GM12878 (cell line): ENCODE measurements at regions of chr5 and their contacts with region 1.

Region 1: DNA sequence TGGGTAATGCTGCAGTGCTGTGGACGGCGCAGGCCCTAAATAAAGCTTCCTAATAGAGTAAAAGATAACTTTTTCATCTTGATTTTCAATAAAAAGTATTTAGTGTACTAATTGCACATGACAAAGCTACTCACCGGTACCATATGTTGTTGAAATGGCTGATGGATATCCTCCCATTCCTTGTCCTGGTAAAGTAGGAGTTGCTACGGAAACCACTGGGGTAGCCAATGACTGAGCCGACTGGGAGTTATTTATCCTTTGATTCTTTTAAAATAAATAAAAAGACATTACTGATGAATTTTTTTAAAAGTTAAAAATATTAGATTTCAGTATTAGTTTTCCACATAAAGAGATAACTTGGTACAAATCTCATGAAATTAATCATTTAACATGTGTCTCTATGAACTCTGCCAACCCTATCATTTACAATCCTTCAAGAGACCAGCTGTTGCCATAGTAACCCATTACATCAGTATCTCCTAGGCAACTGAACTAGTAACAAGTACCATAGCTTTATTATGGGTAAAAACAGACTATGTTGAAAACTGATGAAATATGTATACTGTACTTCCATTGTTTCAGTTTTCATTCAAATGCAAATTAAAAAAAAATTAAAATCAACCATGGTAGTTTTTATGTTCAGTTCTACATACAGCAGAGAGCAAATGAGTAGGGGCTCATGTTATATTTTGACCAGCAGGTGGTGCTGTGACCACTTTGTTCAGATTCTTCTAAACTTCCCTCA is 153.7 kb downstream of the MEF2C start:
- DNase-seq: peak; percentile 73
- ATAC-seq: peak; percentile 46
- H3K4me3 ChIP-seq: no peak overlapping the region
- H3K27ac ChIP-seq: no peak overlapping the region
- H3K4me1 ChIP-seq: peaks cover 34% of the 10 kb centered on the region
- H3K27me3 ChIP-seq: no peaks in the 10 kb centered on the region
- CTCF ChIP-seq: peak; percentile 54 to 77 (median 58); a peak in 5 of 6 replicates
- EP300 ChIP-seq: no peak
- POLR2A ChIP-seq: no peak
- RAD21 ChIP-seq: peak; percentile 85

Region 2: GRCh38 chr5:88644676-88645075 is 84.6 kb before region 1 on chr5:
- CTCF ChIA-PET with region 1: no interaction called
- POLR2A ChIA-PET with region 1: no interaction called
- RAD21 ChIA-PET with region 1: no interaction called
- SMC1A ChIA-PET with region 1: no interaction called
- in situ Hi-C with region 1: no loop called
- intact Hi-C with region 1: no loop called
- DNase-seq: no peak
- ATAC-seq: no peak
- H3K4me3 ChIP-seq: no peak overlapping the region
- H3K27ac ChIP-seq: no peak overlapping the region
- H3K4me1 ChIP-seq: no peaks in the 10 kb centered on the region
- H3K27me3 ChIP-seq: no peaks in the 10 kb centered on the region
- CTCF ChIP-seq: no peak
- EP300 ChIP-seq: no peak
- POLR2A ChIP-seq: no peak
- RAD21 ChIP-seq: no peak

Region 3: GRCh38 chr5:88659529-88660263 is 69.6 kb before region 1 on chr5:
- CTCF ChIA-PET with region 1: no interaction called
- POLR2A ChIA-PET with region 1: no interaction called
- RAD21 ChIA-PET with region 1: no interaction called
- SMC1A ChIA-PET with region 1: no interaction called
- in situ Hi-C with region 1: no loop called
- intact Hi-C with region 1: no loop called
- DNase-seq: no peak
- ATAC-seq: peak; percentile 43
- H3K4me3 ChIP-seq: peak overlapping the region; percentile 44; the same call in 1 of the 2 replicates
- H3K27ac ChIP-seq: no peak overlapping the region
- H3K4me1 ChIP-seq: peaks cover 20% of the 10 kb centered on the region
- H3K27me3 ChIP-seq: peaks cover 0 to 18% of the 10 kb centered on the region in 2 experiments; a peak in 2 of 4 replicates
- CTCF ChIP-seq: no peak
- EP300 ChIP-seq: no peak
- POLR2A ChIP-seq: no peak
- RAD21 ChIP-seq: no peak

Region 4: GRCh38 chr5:88746438-88746882 is 17.2 kb after region 1 on chr5:
- CTCF ChIA-PET with region 1: interaction called, 25 read pairs
- POLR2A ChIA-PET with region 1: interaction called, 17 read pairs
- RAD21 ChIA-PET with region 1: interaction called, 43 read pairs
- SMC1A ChIA-PET with region 1: interaction called, 83 read pairs
- in situ Hi-C with region 1: no loop called
- intact Hi-C with region 1: no loop called
- DNase-seq: peak; percentile 76
- ATAC-seq: peak; percentile 87
- H3K4me3 ChIP-seq: no peak overlapping the region
- H3K27ac ChIP-seq: peak overlapping the region; percentile 76
- H3K4me1 ChIP-seq: peaks cover 23% of the 10 kb centered on the region; the same call in 1 of the 2 replicates
- H3K27me3 ChIP-seq: no peaks in the 10 kb centered on the region
- CTCF ChIP-seq: no peak
- EP300 ChIP-seq: no peak
- POLR2A ChIP-seq: no peak
- RAD21 ChIP-seq: no peak

Region 5: GRCh38 chr5:88819301-88819999 is 90.2 kb after region 1 on chr5:
- CTCF ChIA-PET with region 1: interaction called, 104 read pairs
- POLR2A ChIA-PET with region 1: interaction called, 13 read pairs
- RAD21 ChIA-PET with region 1: interaction called, 594 read pairs
- SMC1A ChIA-PET with region 1: interaction called, 591 read pairs
- in situ Hi-C with region 1: loop called (anchors 10 kb)
- intact Hi-C with region 1: no loop called
- DNase-seq: no peak
- ATAC-seq: peak; percentile 35
- H3K4me3 ChIP-seq: peak overlapping the region; percentile 67
- H3K27ac ChIP-seq: peak overlapping the region; percentile 86
- H3K4me1 ChIP-seq: peaks cover 23% of the 10 kb centered on the region
- H3K27me3 ChIP-seq: no peaks in the 10 kb centered on the region
- CTCF ChIP-seq: no peak
- EP300 ChIP-seq: no peak
- POLR2A ChIP-seq: no peak
- RAD21 ChIP-seq: no peak

Region 6: DNA sequence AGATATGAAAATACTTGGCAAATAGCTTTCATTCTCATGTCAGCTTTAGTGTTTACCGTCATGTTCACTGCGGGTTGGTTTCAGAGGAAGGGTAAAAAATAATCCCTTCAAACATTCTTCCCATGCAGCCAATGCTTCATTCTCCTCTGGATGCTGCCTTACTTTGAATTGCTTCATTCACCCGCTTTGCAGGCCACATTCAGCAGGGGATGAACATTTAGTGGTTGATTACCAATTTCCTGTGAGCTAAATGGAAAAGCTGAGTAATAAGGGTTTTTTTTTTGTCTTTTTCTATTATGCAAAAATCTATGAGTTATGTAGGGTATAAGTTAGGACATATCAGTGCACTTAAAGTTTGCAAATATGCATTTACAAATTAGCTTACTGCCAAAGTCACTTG is 250.0 kb after region 1 on chr5:
- CTCF ChIA-PET with region 1: interaction called, 5 read pairs
- POLR2A ChIA-PET with region 1: interaction called, 10 read pairs
- RAD21 ChIA-PET with region 1: no interaction called
- SMC1A ChIA-PET with region 1: no interaction called
- in situ Hi-C with region 1: no loop called
- intact Hi-C with region 1: no loop called
- DNase-seq: peak; percentile 34
- ATAC-seq: peak; percentile 82
- H3K4me3 ChIP-seq: no peak overlapping the region
- H3K27ac ChIP-seq: no peak overlapping the region
- H3K4me1 ChIP-seq: 0 out of 2 replicates have a peak, but pooled peaks cover 2% of the 10 kb centered on the region
- H3K27me3 ChIP-seq: no peaks in the 10 kb centered on the region
- CTCF ChIP-seq: no peak
- EP300 ChIP-seq: peak in 1 of 2 experiments; percentile 22; a peak in 1 of 4 replicates
- POLR2A ChIP-seq: no peak
- RAD21 ChIP-seq: 0 out of 2 replicates have a peak, but pooled peaks have one; percentile 9

Region 7: GRCh38 chr5:89277816-89278215 is 548.6 kb after region 1 on chr5:
- CTCF ChIA-PET with region 1: interaction called, 10 read pairs
- POLR2A ChIA-PET with region 1: no interaction called
- RAD21 ChIA-PET with region 1: no interaction called
- SMC1A ChIA-PET with region 1: interaction called, 5 read pairs
- in situ Hi-C with region 1: loop called (anchors 10 kb)
- intact Hi-C with region 1: no loop called
- DNase-seq: no peak
- ATAC-seq: peak; percentile 15; the same call in 1 of the 3 replicates
- H3K4me3 ChIP-seq: no peak overlapping the region
- H3K27ac ChIP-seq: peak overlapping the region; percentile 40
- H3K4me1 ChIP-seq: peaks cover 40% of the 10 kb centered on the region
- H3K27me3 ChIP-seq: no peaks in the 10 kb centered on the region
- CTCF ChIP-seq: no peak
- EP300 ChIP-seq: no peak
- POLR2A ChIP-seq: no peak
- RAD21 ChIP-seq: no peak

Region 8: GRCh38 chr5:89723907-89724306 is 994.7 kb after region 1 on chr5:
- CTCF ChIA-PET with region 1: interaction called, 114 read pairs
- POLR2A ChIA-PET with region 1: no interaction called
- RAD21 ChIA-PET with region 1: interaction called, 71 read pairs
- SMC1A ChIA-PET with region 1: interaction called, 77 read pairs
- in situ Hi-C with region 1: no loop called
- intact Hi-C with region 1: no loop called
- DNase-seq: no peak
- ATAC-seq: no peak
- H3K4me3 ChIP-seq: no peak overlapping the region
- H3K27ac ChIP-seq: no peak overlapping the region
- H3K4me1 ChIP-seq: no peaks in the 10 kb centered on the region
- H3K27me3 ChIP-seq: no peaks in the 10 kb centered on the region
- CTCF ChIP-seq: no peak
- EP300 ChIP-seq: no peak
- POLR2A ChIP-seq: no peak
- RAD21 ChIP-seq: no peak

Region 9: DNA sequence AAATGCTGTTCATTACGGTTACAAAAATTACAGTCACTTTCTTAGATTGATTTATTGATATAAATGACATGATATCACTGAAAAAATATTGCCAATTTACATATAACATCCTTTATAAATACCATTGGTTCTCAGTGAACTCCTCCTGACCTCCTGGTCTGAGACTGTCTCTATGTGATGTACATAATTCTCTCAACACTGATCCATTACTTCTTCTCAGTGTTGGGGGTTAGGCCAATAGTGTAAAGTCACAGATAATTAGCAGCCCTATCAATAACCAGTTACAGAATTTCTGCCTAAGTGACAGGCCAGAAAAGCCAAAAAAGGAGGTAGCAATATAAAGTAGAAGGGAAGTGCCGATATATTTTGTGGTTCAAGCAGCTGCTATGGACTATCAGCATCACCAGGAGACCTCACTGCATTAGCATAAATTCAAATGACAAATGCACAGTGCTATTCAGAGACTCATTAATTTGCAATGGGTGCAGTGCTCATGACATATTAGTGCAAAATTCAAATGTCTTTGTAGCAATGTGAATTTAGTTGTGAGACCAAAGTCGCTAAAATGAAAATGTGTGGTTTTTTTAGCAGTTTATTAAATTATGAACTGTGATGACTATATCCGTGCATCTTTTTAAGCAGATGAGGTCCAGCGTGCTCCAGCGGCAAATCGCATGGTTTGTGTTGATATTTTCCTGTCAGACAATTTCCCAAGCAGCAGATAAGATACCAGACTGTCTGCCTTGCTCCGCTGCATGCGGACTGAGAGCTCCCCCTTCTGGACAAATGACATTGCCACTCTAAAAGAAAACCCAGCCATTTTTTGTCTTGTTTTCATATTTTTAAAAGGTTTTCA is 1535.7 kb after region 1 on chr5:
- CTCF ChIA-PET with region 1: interaction called, 45 read pairs
- POLR2A ChIA-PET with region 1: no interaction called
- RAD21 ChIA-PET with region 1: interaction called, 39 read pairs
- SMC1A ChIA-PET with region 1: interaction called, 23 read pairs
- in situ Hi-C with region 1: loop called (anchors 5 kb)
- intact Hi-C with region 1: loop called (anchors 2 kb)
- DNase-seq: peak; percentile 41
- ATAC-seq: peak; percentile 88
- H3K4me3 ChIP-seq: peak overlapping the region; percentile 26; the same call in 1 of the 2 replicates
- H3K27ac ChIP-seq: no peak overlapping the region
- H3K4me1 ChIP-seq: peaks cover 5% of the 10 kb centered on the region
- H3K27me3 ChIP-seq: no peaks in the 10 kb centered on the region
- CTCF ChIP-seq: peak; percentile 89 to 96 (median 92)
- EP300 ChIP-seq: no peak
- POLR2A ChIP-seq: no peak
- RAD21 ChIP-seq: peak; percentile 99